ENCODE measurements at regions of chr11 and their contacts with region 1.

Region 1: GRCh38 chr11:1469911-1470680 is 16.5 kb downstream of the MOB2 start:
- DNase-seq: peak in 3 of 10 donors; percentile 3 to 79 (median 72)

Region 2: DNA sequence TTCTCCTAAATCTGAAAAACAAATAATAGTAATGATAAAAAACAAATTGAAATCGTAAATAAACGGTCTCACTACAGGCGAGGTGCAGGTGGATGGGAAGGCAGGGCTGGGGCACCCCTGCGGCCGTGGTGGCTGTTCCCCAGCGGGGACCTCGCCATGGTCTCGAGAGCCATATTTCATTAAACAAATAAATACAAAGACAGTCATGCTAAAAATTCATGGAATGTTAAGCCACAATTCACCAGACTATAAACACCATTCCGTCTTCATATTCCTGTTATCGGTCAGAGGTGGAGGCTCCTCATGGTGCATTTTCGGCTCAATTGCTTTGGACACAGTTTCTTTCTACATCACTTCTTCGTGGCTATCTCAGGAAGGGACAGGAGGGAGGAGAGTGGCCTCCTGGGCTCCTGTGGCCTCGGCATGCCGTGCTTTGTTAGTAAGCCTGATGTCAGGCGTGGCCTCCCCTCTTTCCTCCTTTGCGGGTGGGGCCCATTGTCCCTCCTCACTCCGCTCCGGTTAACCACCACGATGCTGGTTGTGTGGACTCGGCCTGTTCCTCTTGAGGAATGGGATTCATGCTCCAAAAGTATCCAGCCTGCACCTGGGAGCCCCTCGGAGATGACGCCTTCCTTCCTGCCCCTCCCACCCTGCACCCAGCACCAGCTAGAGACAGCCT is 96.4 kb before region 1 on chr11:
- intact Hi-C with region 1: no loop called
- DNase-seq: peak in 2 of 10 donors; percentile 30 to 34

Region 3: GRCh38 chr11:1502954-1503707 is 33.0 kb after region 1 on chr11:
- intact Hi-C with region 1: loop called (anchors 5 kb)
- DNase-seq: peak; percentile 51 to 96 (median 76)